AG04450 (cell line): ENCODE measurements at regions of chr1 and their contacts with region 1.

Region 1: DNA sequence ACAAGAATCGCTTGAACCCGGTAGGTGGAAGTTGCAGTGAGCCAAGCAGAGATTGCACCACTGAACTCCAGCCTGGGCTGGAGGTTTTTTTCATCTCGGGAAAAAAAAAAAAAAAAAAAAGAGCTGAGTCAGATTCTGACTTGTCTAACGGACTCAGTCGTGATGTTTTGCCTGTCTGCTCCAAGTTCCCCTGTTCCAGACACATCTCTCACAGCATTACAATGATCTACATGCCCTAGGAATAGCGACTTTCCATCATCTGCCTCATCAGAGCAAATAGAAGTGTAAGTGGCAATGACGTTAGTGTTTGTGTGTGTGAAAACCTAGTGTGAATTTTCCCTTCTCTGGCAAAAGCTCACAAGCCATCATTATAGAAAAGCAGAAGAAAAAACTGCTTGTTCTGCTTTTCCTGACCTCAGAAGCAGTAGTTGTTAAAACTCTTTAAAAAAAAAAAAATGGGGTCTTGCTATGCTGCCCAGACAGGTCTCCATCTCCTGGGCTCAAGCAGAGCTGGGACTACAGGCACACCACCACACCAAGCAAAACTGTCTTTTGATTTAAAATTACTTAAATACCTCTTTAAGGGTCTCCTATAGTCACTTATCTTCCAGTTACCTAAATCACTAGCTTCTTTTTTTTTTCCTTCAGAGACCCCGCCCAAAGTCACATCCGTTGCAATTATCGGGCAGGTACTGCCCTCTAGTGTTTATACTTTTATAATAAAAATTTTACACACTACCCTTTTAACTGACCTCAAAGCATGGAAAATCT is 37.3 kb downstream of the PLEKHO1 start:
- DNase-seq: no peak
- H3K4me3 ChIP-seq: no peak overlapping the region
- H3K27ac ChIP-seq: peak overlapping the region; percentile 0
- H3K27me3 ChIP-seq: no peaks in the 10 kb centered on the region
- CTCF ChIP-seq: peak; percentile 52

Region 2: DNA sequence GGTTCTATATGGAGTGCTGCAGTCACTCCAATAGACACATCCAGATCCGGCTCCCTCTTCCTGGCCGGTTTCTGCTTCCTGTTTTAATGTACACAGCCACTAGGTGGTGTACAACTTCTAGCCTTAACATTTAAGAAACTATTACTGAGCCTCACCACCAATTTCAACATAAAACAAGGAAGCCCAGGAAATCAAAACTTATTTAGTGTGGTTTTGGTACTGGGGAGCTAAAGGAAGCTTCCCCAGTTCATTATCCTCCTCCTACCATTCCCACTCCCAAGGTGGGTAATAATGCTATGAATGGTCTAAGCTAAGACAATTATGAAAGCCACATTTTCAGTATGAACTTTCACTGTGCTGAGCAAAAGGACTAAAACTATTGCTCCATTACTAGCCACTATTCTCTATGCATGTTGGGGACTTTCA is 224.8 kb before region 1 on chr1:
- CTCF ChIA-PET with region 1: interaction called, 52 read pairs
- POLR2A ChIA-PET with region 1: no interaction called
- DNase-seq: peak; percentile 62
- H3K4me3 ChIP-seq: no peak overlapping the region
- H3K27ac ChIP-seq: no peak overlapping the region
- H3K27me3 ChIP-seq: no peaks in the 10 kb centered on the region
- CTCF ChIP-seq: peak; percentile 75

Region 3: GRCh38 chr1:150072959-150073358 is 114.0 kb before region 1 on chr1:
- CTCF ChIA-PET with region 1: interaction called, 125 read pairs
- POLR2A ChIA-PET with region 1: no interaction called
- DNase-seq: no peak
- H3K4me3 ChIP-seq: no peak overlapping the region
- H3K27ac ChIP-seq: no peak overlapping the region
- H3K27me3 ChIP-seq: no peaks in the 10 kb centered on the region
- CTCF ChIP-seq: peak; percentile 46

Region 4: GRCh38 chr1:150162862-150163706 is 23.9 kb before region 1 on chr1:
- CTCF ChIA-PET with region 1: interaction called, 20 read pairs
- POLR2A ChIA-PET with region 1: interaction called, 13 read pairs
- DNase-seq: peak; percentile 99
- H3K4me3 ChIP-seq: peak overlapping the region; percentile 30; the same call in 1 of the 2 replicates
- H3K27ac ChIP-seq: peak overlapping the region; percentile 99
- H3K27me3 ChIP-seq: no peaks in the 10 kb centered on the region
- CTCF ChIP-seq: no peak; the same call in 1 of the 2 replicates

Region 5: DNA sequence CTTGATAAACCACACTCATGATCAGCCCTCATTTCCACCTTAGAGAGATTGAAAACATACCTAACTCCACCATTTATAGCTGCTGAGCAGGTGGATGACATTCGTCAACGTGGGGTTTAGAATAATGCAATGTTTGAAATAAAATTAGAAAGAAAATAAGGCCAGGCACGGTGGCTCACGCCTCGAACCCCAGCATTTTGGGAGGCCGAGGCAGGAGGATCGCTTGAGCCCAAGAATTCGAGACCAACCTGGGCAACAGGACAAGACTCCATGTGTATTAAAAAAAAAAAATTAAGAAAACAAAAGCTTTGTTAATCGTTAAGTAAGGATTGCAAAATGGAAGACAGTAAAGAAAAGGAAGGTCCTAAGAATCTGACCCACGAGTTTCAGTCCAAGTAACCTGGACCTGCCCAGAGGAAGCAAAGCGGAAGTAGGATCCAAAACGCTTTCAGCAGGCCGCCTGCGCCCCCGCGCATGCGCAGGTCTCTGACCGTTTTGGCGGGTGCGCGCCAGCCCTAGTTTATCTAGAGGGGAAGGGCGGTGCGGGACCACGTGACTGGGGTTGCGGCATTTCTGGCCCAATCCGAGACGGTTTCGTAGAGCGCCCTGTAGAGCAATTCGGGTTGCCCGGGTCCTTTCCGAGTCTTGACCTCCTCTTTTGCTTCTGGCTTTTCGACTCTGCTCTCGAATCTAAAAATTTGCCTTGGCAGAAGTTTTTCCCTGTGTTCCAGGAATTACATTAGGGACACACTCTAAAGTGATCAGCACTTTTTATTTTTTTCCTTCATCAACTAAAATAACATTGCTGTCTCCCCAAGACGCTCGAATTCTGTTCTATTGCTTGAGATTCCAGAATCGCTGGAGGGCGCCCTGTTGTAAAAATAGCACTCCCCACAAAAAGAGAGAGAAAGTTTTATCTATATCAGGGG is 26.5 kb after region 1 on chr1:
- CTCF ChIA-PET with region 1: interaction called, 11 read pairs
- POLR2A ChIA-PET with region 1: no interaction called
- DNase-seq: peak; percentile 82
- H3K4me3 ChIP-seq: peak overlapping the region; percentile 60
- H3K27ac ChIP-seq: peak overlapping the region; percentile 63
- H3K27me3 ChIP-seq: no peaks in the 10 kb centered on the region
- CTCF ChIP-seq: peak; percentile 41

Region 6: GRCh38 chr1:150309770-150310508 is 123.0 kb after region 1 on chr1:
- CTCF ChIA-PET with region 1: no interaction called
- POLR2A ChIA-PET with region 1: no interaction called
- DNase-seq: no peak
- H3K4me3 ChIP-seq: no peak overlapping the region
- H3K27ac ChIP-seq: no peak overlapping the region
- H3K27me3 ChIP-seq: no peaks in the 10 kb centered on the region
- CTCF ChIP-seq: no peak